AG04449 (cell line): ENCODE measurements at regions of chr1 and their contacts with region 1.

Region 1: DNA sequence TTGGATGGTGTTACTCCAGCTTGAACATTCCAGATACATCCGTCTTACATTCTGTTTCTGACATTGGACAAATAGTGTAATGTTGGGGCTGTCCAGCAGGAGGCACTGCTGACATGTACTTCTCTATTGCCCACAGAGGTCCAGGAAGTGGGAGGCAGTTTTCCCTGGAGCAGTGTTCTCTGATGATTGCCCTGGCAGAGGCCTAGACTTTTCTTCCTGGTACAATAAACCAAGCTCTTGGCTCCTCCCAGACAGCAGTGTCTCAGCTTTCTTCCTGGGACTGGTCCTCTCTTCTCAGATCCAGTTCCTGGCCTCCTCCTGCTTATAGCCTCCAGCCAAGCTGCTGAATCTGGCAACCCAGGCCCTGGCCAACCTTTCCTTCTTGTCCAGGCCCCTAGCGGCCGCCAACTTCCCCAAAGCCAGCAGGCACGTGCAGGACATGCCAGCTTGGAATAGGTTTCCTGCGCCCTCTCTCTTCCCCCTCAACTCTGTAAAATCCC is 14.9 kb upstream of the IFNLR1 start:
- DNase-seq: peak; percentile 53
- H3K4me3 ChIP-seq: no peak overlapping the region
- CTCF ChIP-seq: peak; percentile 84

Region 2: GRCh38 chr1:24179251-24179840 is 22.6 kb before region 1 on chr1:
- CTCF ChIA-PET with region 1: interaction called, 17 read pairs
- POLR2A ChIA-PET with region 1: no interaction called
- DNase-seq: no peak
- H3K4me3 ChIP-seq: no peak overlapping the region
- CTCF ChIP-seq: no peak

Region 3: GRCh38 chr1:24308365-24309015 is 106.5 kb after region 1 on chr1:
- CTCF ChIA-PET with region 1: interaction called, 19 read pairs
- POLR2A ChIA-PET with region 1: no interaction called
- DNase-seq: no peak
- H3K4me3 ChIP-seq: no peak overlapping the region
- CTCF ChIP-seq: peak; percentile 51

Region 4: DNA sequence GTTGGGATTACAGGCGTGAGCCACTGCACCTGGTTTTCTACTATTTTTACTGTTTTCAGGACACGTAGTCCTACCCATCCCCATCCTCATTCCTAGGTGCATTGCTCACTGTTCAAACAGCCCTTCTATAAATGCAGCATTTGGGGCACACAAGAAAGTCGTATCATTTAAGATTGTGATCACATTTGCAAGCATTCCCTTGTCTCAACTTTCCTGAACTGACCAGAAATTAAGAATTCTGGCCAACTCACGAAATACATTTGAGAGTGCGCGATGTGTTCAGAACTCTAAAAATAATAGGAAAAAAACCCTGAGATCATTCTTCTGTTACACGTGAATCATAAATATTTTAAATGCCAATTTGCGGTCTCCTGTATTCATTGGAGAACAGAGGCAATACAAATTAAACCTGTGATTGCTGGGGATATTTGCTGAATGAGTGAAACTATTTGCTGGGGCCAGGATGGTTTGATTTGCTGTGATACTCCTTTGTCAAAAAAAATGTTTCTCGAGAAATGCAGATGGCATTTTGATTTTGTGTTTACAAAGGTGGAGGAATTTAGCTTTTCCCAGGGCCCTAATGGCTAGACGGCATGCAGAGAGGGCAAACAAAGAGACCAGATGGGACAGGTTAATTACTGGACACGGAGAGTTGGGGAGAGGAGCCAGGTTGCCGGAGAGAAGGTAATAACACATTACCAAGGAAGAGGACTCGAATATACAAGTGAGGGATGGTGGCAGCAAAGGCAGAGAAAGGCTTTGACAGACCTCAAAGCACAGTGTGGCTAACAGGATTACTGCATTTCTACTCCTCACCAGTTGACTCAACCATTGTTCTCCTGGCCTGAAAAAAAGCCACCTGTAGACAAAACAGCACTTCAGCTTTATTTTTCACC is 173.1 kb after region 1 on chr1:
- CTCF ChIA-PET with region 1: interaction called, 40 read pairs
- POLR2A ChIA-PET with region 1: no interaction called
- DNase-seq: no peak
- H3K4me3 ChIP-seq: no peak overlapping the region
- CTCF ChIP-seq: no peak

Region 5: GRCh38 chr1:24443241-24443656 is 241.3 kb after region 1 on chr1:
- CTCF ChIA-PET with region 1: interaction called, 10 read pairs
- POLR2A ChIA-PET with region 1: no interaction called
- DNase-seq: no peak
- H3K4me3 ChIP-seq: no peak overlapping the region
- CTCF ChIP-seq: no peak

Region 6: GRCh38 chr1:24642481-24643361 is 440.7 kb after region 1 on chr1 and contains the start of gene SRRM1:
- CTCF ChIA-PET with region 1: interaction called, 243 read pairs
- POLR2A ChIA-PET with region 1: no interaction called
- DNase-seq: peak; percentile 99
- H3K4me3 ChIP-seq: peak within 1 kb of the TSS; percentile 95
- CTCF ChIP-seq: peak; percentile 34